HEK293 (cell line): ENCODE measurements at regions of chr19 and their contacts with region 1.

Region 1: GRCh38 chr19:7340959-7341837 is 7.5 kb upstream of the ARHGEF18 start:
- H3K4me3 ChIP-seq: no peak overlapping the region
- H3K27ac ChIP-seq: no peak overlapping the region
- H3K4me1 ChIP-seq: no peaks in the 10 kb centered on the region
- CTCF ChIP-seq: peak; percentile 88

Region 2: GRCh38 chr19:7098701-7099596 is 242.2 kb before region 1 on chr19:
- CTCF ChIA-PET with region 1: interaction called, 70 read pairs
- POLR2A ChIA-PET with region 1: interaction called, 4 read pairs
- H3K4me3 ChIP-seq: peak overlapping the region; percentile 51
- H3K27ac ChIP-seq: peak overlapping the region; percentile 89
- H3K4me1 ChIP-seq: no peaks in the 10 kb centered on the region
- CTCF ChIP-seq: no peak

Region 3: GRCh38 chr19:7328647-7329046 is 12.6 kb before region 1 on chr19:
- CTCF ChIA-PET with region 1: interaction called, 11 read pairs
- POLR2A ChIA-PET with region 1: no interaction called
- H3K4me3 ChIP-seq: no peak overlapping the region
- H3K27ac ChIP-seq: no peak overlapping the region
- H3K4me1 ChIP-seq: no peaks in the 10 kb centered on the region
- CTCF ChIP-seq: no peak

Region 4: DNA sequence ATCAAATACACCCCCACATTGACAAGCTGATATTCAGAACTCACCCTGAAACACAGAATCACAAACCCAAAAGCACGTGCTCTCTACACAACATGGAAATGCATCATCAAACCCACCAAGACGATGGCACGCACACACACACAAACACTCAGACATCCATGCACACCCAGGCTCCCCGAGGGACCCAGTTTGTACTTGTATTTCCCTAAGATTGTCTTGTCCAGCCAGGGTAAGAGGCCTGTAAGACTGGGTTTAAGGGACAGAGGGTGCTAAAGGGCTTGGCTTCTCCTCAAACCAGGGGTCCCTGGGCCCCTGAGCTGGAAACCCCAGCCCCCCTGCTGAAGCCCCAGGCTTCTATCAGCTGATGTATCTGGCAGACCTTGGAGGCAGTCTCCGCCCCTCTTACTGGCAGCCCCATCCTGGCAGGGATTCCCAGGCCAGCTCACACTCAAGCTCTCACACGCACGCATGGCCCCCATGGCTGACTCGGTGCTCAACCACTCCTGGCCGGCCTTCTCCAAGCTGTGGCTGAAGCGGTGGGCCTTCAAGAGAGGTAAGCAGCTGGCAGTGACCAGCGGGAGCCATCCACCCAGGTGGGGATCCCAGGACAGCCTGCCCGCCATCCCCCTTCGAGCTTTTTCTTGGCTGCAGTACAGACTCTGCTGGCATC is 14.1 kb after region 1 on chr19:
- CTCF ChIA-PET with region 1: interaction called, 11 read pairs
- POLR2A ChIA-PET with region 1: interaction called, 3 read pairs
- H3K4me3 ChIP-seq: no peak overlapping the region
- H3K27ac ChIP-seq: no peak overlapping the region
- H3K4me1 ChIP-seq: no peaks in the 10 kb centered on the region
- CTCF ChIP-seq: no peak